H1 (cell line): ENCODE measurements at regions of chr17 and their contacts with region 1.

Region 1: DNA sequence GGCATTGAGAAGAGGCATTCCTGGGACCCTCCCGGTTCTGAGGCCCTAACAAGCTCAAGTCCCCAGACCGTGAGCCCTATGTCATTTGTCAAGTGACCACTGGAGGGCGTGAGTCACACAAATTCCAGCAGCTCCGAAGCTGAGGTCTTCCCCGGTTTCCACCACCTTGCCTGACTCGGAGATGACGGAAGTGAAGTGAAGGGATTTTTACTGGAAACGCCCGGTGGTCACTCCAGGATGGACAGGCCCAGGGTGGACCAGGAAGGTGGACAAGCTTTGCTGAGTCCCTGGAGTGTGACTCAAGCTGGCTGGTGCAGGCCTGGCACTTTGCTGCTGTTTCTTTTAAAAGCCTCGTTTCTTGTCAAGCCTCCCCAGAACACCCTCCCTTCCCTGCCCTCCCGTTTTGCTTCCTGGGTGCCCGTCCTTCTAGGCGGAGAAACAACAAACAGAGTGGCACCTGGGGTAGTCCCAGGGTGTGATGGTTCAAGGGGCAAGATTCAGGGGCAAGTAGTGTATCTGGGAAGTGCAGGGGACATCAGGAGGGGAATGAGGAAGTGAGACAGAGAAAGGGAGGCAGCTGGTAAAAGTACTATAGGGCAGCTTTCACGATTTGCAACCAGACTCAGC is 5.3 kb upstream of the NOS2 start:
- DNase-seq: peak; percentile 59 to 91
- H3K4me3 ChIP-seq: peak overlapping the region in 1 of 4 experiments; percentile 29; a peak in 1 of 8 replicates
- H3K27ac ChIP-seq: no peak overlapping the region
- H3K4me1 ChIP-seq: peaks cover 0 to 8% (median 4%) of the 10 kb centered on the region in 4 experiments
- H3K27me3 ChIP-seq: no peaks in the 10 kb centered on the region
- CTCF ChIP-seq: peak; percentile 76 to 97 (median 92)
- EP300 ChIP-seq: no peak
- POLR2A ChIP-seq: no peak
- RAD21 ChIP-seq: peak; percentile 89 to 94

Region 2: GRCh38 chr17:27778193-27778592 is 27.4 kb before region 1 on chr17:
- CTCF ChIA-PET with region 1: interaction called, 38 read pairs
- POLR2A ChIA-PET with region 1: no interaction called
- DNase-seq: no peak
- H3K4me3 ChIP-seq: no peak overlapping the region
- H3K27ac ChIP-seq: no peak overlapping the region
- H3K4me1 ChIP-seq: peaks cover 0 to 6% (median 4%) of the 10 kb centered on the region in 4 experiments; a peak in 6 of 7 replicates
- H3K27me3 ChIP-seq: no peaks in the 10 kb centered on the region
- CTCF ChIP-seq: no peak
- EP300 ChIP-seq: no peak
- POLR2A ChIP-seq: no peak
- RAD21 ChIP-seq: no peak

Region 3: DNA sequence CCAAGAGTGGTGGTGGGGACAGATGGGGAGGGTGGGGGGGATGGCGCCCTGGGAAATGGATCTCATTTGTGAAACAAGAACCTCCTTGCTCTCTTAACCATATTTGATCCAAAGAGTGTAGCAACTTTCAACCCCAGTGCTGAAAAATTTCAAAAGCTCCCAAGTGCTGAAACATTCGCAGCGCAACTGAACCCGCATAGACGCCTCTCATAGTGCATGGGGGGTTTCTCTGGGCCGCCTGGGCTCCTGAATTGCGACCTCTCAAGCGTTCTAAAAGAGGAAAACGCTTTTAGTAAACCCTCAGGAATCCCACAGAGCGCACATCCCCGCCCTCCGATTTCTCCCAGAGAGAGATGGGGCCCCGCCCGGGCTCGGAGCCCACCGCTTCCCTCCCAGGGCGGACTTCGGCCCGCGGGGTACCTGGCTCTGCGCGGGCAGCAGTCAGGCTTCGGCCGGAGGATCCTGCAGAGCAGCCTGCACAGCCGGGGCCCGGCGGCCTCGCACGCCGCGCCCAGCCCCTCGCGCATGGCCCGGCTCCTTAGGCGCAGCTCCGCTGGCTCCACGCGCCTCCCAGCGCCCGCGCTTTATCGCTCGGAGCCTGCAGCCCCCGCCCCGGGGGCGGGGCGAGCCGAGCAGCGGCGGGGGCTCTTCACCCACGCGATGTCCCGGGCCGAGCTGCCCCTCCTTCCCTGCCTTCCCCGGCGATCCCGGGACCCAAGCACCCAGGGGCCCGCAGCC is 12.3 kb before region 1 on chr17:
- CTCF ChIA-PET with region 1: interaction called, 41 read pairs
- POLR2A ChIA-PET with region 1: no interaction called
- DNase-seq: peak in 1 of 2 experiments; percentile 67
- H3K4me3 ChIP-seq: peak overlapping the region; percentile 36 to 60 (median 41)
- H3K27ac ChIP-seq: no peak overlapping the region
- H3K4me1 ChIP-seq: peaks cover 0 to 3% (median 1%) of the 10 kb centered on the region in 4 experiments; a peak in 3 of 7 replicates
- H3K27me3 ChIP-seq: peaks cover 0 to 24% (median 19%) of the 10 kb centered on the region in 4 experiments; a peak in 6 of 7 replicates
- CTCF ChIP-seq: no peak
- EP300 ChIP-seq: no peak
- POLR2A ChIP-seq: no peak
- RAD21 ChIP-seq: no peak

Region 4: DNA sequence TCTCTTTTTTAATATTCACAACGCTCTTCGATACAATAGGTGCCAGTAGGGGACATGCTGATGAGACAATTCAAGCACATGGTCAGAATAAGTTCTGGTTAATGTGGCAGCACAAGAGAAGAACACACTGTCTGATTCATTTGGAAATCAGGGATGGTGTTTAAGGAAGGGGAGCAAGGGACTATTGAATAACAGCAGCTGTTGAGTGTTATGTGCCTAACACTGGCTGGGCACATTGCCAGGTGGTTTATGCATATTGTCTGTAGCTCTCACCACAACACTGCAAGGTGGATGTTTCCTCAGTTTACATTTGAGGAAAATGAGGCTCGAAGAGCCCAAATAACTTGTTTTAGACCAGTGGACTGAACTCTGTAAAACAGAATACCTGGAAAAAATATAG is 43.3 kb after region 1 on chr17:
- CTCF ChIA-PET with region 1: interaction called, 27 read pairs
- POLR2A ChIA-PET with region 1: no interaction called
- DNase-seq: no peak
- H3K4me3 ChIP-seq: no peak overlapping the region
- H3K27ac ChIP-seq: no peak overlapping the region
- H3K4me1 ChIP-seq: peaks cover 0 to 8% (median 0%) of the 10 kb centered on the region in 4 experiments; a peak in 2 of 7 replicates
- H3K27me3 ChIP-seq: no peaks in the 10 kb centered on the region; a peak in 1 of 7 replicates
- CTCF ChIP-seq: no peak
- EP300 ChIP-seq: no peak
- POLR2A ChIP-seq: no peak
- RAD21 ChIP-seq: no peak

Region 5: GRCh38 chr17:27921077-27921476 is 115.4 kb after region 1 on chr17:
- CTCF ChIA-PET with region 1: no interaction called
- POLR2A ChIA-PET with region 1: no interaction called
- DNase-seq: no peak
- H3K4me3 ChIP-seq: no peak overlapping the region
- H3K27ac ChIP-seq: no peak overlapping the region
- H3K4me1 ChIP-seq: peaks cover 0 to 6% (median 4%) of the 10 kb centered on the region in 4 experiments; a peak in 4 of 7 replicates
- H3K27me3 ChIP-seq: peaks cover 17 to 27% (median 26%) of the 10 kb centered on the region in 4 experiments
- CTCF ChIP-seq: no peak
- EP300 ChIP-seq: no peak
- POLR2A ChIP-seq: no peak
- RAD21 ChIP-seq: no peak